ENCODE measurements at regions of chr2 and their contacts with region 1.

Region 1: GRCh38 chr2:128178650-128179460 is 87.9 kb downstream of the UGGT1 start:
- DNase-seq: peak; percentile 52 to 86
- H3K4me3 ChIP-seq: no peak overlapping the region
- H3K27ac ChIP-seq: peak overlapping the region in 4 of 5 donors; percentile 24 to 70 (median 60)
- H3K4me1 ChIP-seq: peaks cover 0 to 21% (median 8%) of the 10 kb centered on the region in 4 donors
- H3K27me3 ChIP-seq: no peaks in the 10 kb centered on the region
- CTCF ChIP-seq: peak in 5 of 7 experiments; percentile 31 to 64 (median 55)
- EP300 ChIP-seq: peak; percentile 52
- POLR2A ChIP-seq: no peak

Region 2: GRCh38 chr2:128305159-128306087 is 126.6 kb after region 1 on chr2:
- intact Hi-C with region 1: loop called (anchors 10 kb)
- DNase-seq: peak; percentile 73 to 95
- H3K4me3 ChIP-seq: peak overlapping the region in 1 of 4 donors; percentile 20
- H3K27ac ChIP-seq: peak overlapping the region; percentile 40 to 85 (median 74)
- H3K4me1 ChIP-seq: peaks cover 65 to 97% (median 89%) of the 10 kb centered on the region in 4 donors
- H3K27me3 ChIP-seq: no peaks in the 10 kb centered on the region
- CTCF ChIP-seq: no peak
- EP300 ChIP-seq: peak; percentile 39
- POLR2A ChIP-seq: no peak

Measured in stomach (tissue), 19 donors.